K562 (cell line): ENCODE measurements at regions of chr5 and their contacts with region 1.

Region 1: GRCh38 chr5:174935854-174936474 is 211.6 kb downstream of the MSX2 start:
- DNase-seq: peak; percentile 53 to 68 (median 64)
- ATAC-seq: peak; percentile 90
- H3K4me3 ChIP-seq: no peak overlapping the region
- H3K27ac ChIP-seq: no peak overlapping the region
- H3K4me1 ChIP-seq: no peaks in the 10 kb centered on the region
- H3K27me3 ChIP-seq: peaks cover 0 to 12% of the 10 kb centered on the region in 2 experiments; a peak in 2 of 5 replicates
- CTCF ChIP-seq: peak; percentile 79 to 91 (median 85)
- EP300 ChIP-seq: no peak
- POLR2A ChIP-seq: no peak
- RAD21 ChIP-seq: peak; percentile 53 to 85

Region 2: DNA sequence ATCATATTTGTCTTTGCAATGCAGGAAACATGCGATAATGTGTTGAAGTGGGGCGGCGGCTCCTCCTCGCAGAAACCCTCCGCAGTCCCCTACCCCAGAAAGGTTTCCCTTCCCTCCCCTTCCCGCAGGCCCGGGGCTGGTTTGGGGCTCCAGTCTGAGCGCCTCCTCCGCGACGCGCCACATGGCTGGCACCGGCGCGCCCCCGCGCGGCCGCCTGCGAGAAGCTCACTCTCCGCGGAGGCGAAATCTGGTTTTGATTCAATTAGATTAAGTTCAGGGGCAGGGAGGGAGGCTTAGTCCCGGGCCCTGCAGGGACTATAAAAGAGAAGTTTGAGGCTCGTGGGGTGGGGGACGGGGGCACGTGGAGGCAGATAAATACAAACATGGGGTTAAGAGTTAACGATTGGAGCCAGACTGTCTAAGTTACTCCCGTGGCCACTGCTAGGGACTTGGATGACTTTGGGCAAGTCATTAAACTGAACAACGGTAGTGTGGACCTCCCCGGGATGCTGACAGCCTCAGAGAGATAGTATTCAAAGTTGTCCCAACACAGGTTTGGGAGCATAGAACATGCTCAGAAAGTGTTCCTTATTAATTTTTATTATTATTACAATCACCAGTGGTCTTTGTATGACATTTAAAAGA is 142.2 kb before region 1 on chr5:
- CTCF ChIA-PET with region 1: no interaction called
- POLR2A ChIA-PET with region 1: no interaction called
- in situ Hi-C with region 1: no loop called
- intact Hi-C with region 1: loop called (anchors 10 kb)
- DNase-seq: peak; percentile 57 to 65 (median 61)
- ATAC-seq: peak; percentile 96
- H3K4me3 ChIP-seq: no peak overlapping the region
- H3K27ac ChIP-seq: no peak overlapping the region
- H3K4me1 ChIP-seq: peaks cover 0 to 4% of the 10 kb centered on the region in 2 experiments; a peak in 1 of 5 replicates
- H3K27me3 ChIP-seq: peaks cover 0 to 4% of the 10 kb centered on the region in 2 experiments; a peak in 2 of 5 replicates
- CTCF ChIP-seq: peak; percentile 85 to 90 (median 86)
- EP300 ChIP-seq: no peak
- POLR2A ChIP-seq: no peak
- RAD21 ChIP-seq: peak; percentile 82 to 83

Region 3: GRCh38 chr5:174910245-174910737 is 25.7 kb before region 1 on chr5:
- CTCF ChIA-PET with region 1: interaction called, 15 read pairs
- POLR2A ChIA-PET with region 1: no interaction called
- in situ Hi-C with region 1: no loop called
- intact Hi-C with region 1: loop called (anchors 2 kb)
- DNase-seq: peak; percentile 70 to 77 (median 75)
- ATAC-seq: peak; percentile 100
- H3K4me3 ChIP-seq: no peak overlapping the region
- H3K27ac ChIP-seq: no peak overlapping the region
- H3K4me1 ChIP-seq: 0 out of 5 replicates have a peak, but pooled peaks cover 0 to 2% of the 10 kb centered on the region in 2 experiments
- H3K27me3 ChIP-seq: no peaks in the 10 kb centered on the region
- CTCF ChIP-seq: peak; percentile 81 to 86 (median 82)
- EP300 ChIP-seq: no peak
- POLR2A ChIP-seq: no peak
- RAD21 ChIP-seq: peak; percentile 73 to 79